ENCODE measurements at regions of chr13 and their contacts with region 1.

Region 1: GRCh38 chr13:113816946-113817859 is 46.7 kb downstream of the GAS6 start:
- DNase-seq: peak; percentile 87 to 93
- ATAC-seq: peak; percentile 36 to 47 (median 39)
- H3K4me3 ChIP-seq: no peak overlapping the region
- H3K27ac ChIP-seq: peak overlapping the region; percentile 58
- H3K4me1 ChIP-seq: peaks cover 41% of the 10 kb centered on the region
- H3K27me3 ChIP-seq: peaks cover 0 to 2% (median 0%) of the 10 kb centered on the region in 3 donors
- CTCF ChIP-seq: peak; percentile 87

Region 2: GRCh38 chr13:113729187-113730019 is 87.8 kb before region 1 on chr13:
- intact Hi-C with region 1: no loop called
- DNase-seq: peak in 1 of 2 donors; percentile 44
- ATAC-seq: peak; percentile 30 to 71 (median 38)
- H3K4me3 ChIP-seq: no peak overlapping the region
- H3K27ac ChIP-seq: no peak overlapping the region
- H3K4me1 ChIP-seq: peaks cover 4% of the 10 kb centered on the region
- H3K27me3 ChIP-seq: peaks cover 0 to 25% (median 2%) of the 10 kb centered on the region in 3 donors
- CTCF ChIP-seq: no peak

Region 3: GRCh38 chr13:113863436-113864272 is 46.5 kb after region 1 on chr13 and contains the start of gene GAS6:
- intact Hi-C with region 1: loop called (anchors 2 to 5 kb)
- DNase-seq: peak; percentile 74 to 87
- ATAC-seq: peak; percentile 59 to 84 (median 70)
- H3K4me3 ChIP-seq: peak within 1 kb of the TSS; percentile 90
- H3K27ac ChIP-seq: peak within 1 kb of the TSS; percentile 85
- H3K4me1 ChIP-seq: peaks cover 25% of the 10 kb centered on the region
- H3K27me3 ChIP-seq: no peaks in the 10 kb centered on the region
- CTCF ChIP-seq: peak; percentile 23
- total RNA-seq, gene GAS6: 65.5 to 103 (median 75.9) TPM

Region 4: DNA sequence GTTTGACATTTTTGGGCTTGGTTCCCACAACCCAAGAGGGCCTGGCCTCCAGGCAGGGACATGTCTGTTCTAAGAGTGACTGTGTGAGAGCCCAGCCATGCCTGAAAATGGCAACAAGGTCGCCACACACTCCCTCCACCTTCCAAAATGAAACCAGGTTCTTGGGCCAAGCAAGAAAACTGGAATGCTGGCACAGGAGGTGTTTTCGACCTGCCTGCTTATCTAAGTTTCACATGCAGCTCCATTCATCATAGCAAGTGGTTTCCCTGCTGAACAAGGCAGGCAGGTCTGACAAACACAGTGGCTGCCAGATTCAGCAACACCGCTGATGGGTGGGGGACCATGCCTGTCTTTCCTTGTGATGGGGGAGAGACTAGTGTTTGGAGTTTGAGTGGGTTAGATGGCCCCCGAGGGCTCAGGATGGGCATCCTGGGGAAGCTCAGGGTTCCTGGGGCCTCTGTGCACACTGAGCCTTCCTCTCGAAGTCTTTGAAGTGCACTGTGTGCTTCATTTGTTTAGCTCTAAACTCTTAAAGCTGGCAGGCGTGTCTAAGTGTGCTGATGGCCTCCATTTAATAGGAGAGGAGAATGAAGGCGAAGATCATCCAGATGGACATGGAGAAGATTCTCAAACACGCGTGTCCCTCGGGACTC is 64.5 kb after region 1 on chr13:
- intact Hi-C with region 1: no loop called
- DNase-seq: no peak
- ATAC-seq: peak in 3 of 4 donors; percentile 20 to 49 (median 24)
- H3K4me3 ChIP-seq: no peak overlapping the region
- H3K27ac ChIP-seq: peak overlapping the region; percentile 66
- H3K4me1 ChIP-seq: peaks cover 33% of the 10 kb centered on the region
- H3K27me3 ChIP-seq: no peaks in the 10 kb centered on the region
- CTCF ChIP-seq: no peak

Region 5: GRCh38 chr13:113904411-113904810 is 87.2 kb after region 1 on chr13:
- intact Hi-C with region 1: loop called (anchors 1 to 2 kb)
- DNase-seq: peak; percentile 53 to 80
- ATAC-seq: peak; percentile 93 to 97 (median 94)
- H3K4me3 ChIP-seq: no peak overlapping the region
- H3K27ac ChIP-seq: no peak overlapping the region
- H3K4me1 ChIP-seq: no peaks in the 10 kb centered on the region
- H3K27me3 ChIP-seq: no peaks in the 10 kb centered on the region
- CTCF ChIP-seq: peak; percentile 74

Region 6: DNA sequence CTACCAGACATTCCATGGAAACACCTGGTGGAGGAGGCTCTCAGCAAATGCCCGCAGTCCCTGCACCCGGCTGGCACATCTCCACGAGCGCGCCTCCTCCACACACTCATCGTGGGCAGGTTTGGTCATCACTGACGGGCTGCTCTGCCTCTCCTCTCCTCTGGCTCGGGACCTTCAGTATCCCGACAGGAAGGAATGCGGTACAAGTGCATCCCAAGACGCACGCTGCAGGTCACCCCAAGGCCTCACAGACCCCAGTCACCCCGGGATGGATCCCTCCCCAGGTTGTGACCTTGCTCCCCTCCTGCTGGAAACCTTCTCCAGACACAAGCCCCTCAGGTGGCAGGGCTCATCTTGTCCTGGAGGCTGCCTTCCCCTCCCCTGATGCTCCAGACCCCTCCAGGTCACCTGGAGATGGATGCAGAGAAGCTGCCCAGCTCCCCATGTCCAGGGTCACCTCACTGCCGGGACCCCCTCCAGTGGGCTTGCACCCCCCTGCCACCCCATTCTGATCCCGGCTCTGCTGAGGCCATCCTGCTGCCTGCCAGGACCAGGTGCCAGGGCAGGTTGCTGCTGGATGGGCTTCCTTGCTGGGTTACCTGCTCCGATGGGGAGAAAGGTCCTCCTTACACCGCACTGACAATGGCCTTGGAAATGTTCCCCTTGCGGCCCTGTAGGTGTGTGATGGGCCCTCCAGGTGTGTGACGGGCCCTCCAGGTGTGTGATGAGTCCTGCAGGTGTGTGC is 126.8 kb after region 1 on chr13:
- intact Hi-C with region 1: loop called (anchors 1 to 2 kb)
- DNase-seq: peak in 1 of 2 donors; percentile 49
- ATAC-seq: no peak
- H3K4me3 ChIP-seq: no peak overlapping the region
- H3K27ac ChIP-seq: no peak overlapping the region
- H3K4me1 ChIP-seq: no peaks in the 10 kb centered on the region
- H3K27me3 ChIP-seq: peaks cover 0 to 16% (median 0%) of the 10 kb centered on the region in 3 donors
- CTCF ChIP-seq: no peak

Region 7: GRCh38 chr13:113951246-113951999 is 134.2 kb after region 1 on chr13:
- intact Hi-C with region 1: loop called in 1 of 2 experiments (anchors 1 kb)
- DNase-seq: peak; percentile 89 to 95
- ATAC-seq: peak; percentile 91 to 97 (median 94)
- H3K4me3 ChIP-seq: peak overlapping the region; percentile 38
- H3K27ac ChIP-seq: no peak overlapping the region
- H3K4me1 ChIP-seq: peaks cover 5% of the 10 kb centered on the region
- H3K27me3 ChIP-seq: no peaks in the 10 kb centered on the region
- CTCF ChIP-seq: peak; percentile 86

Region 8: GRCh38 chr13:114226699-114227323 is 409.6 kb after region 1 on chr13:
- intact Hi-C with region 1: loop called (anchors 2 to 5 kb)
- DNase-seq: peak; percentile 80 to 90
- ATAC-seq: peak; percentile 94 to 97 (median 96)
- H3K4me3 ChIP-seq: no peak overlapping the region
- H3K27ac ChIP-seq: no peak overlapping the region
- H3K4me1 ChIP-seq: peaks cover 3% of the 10 kb centered on the region
- H3K27me3 ChIP-seq: peaks cover 0 to 20% (median 2%) of the 10 kb centered on the region in 3 donors
- CTCF ChIP-seq: peak; percentile 90